PC-9 (cell line): ENCODE measurements at regions of chr3 and their contacts with region 1.

Region 1: GRCh38 chr3:139935016-139935865 is at the start of gene CLSTN2:
- DNase-seq: no peak
- H3K4me3 ChIP-seq: no peak within 1 kb of the TSS
- H3K27ac ChIP-seq: no peak within 1 kb of the TSS
- H3K4me1 ChIP-seq: no peaks in the 10 kb centered on the region
- H3K27me3 ChIP-seq: no peaks in the 10 kb centered on the region
- CTCF ChIP-seq: no peak
- total RNA-seq, gene CLSTN2: not detected in 2 replicates

Region 2: GRCh38 chr3:140552898-140553297 is 617.7 kb after region 1 on chr3:
- CTCF ChIA-PET with region 1: no interaction called
- POLR2A ChIA-PET with region 1: no interaction called
- intact Hi-C with region 1: loop called (anchors 5 kb)
- DNase-seq: no peak
- H3K4me3 ChIP-seq: no peak overlapping the region
- H3K27ac ChIP-seq: no peak overlapping the region
- H3K4me1 ChIP-seq: no peaks in the 10 kb centered on the region
- H3K27me3 ChIP-seq: no peaks in the 10 kb centered on the region
- CTCF ChIP-seq: no peak